B cell (primary cell): ENCODE measurements at regions of chr2 and their contacts with region 1.

Region 1: DNA sequence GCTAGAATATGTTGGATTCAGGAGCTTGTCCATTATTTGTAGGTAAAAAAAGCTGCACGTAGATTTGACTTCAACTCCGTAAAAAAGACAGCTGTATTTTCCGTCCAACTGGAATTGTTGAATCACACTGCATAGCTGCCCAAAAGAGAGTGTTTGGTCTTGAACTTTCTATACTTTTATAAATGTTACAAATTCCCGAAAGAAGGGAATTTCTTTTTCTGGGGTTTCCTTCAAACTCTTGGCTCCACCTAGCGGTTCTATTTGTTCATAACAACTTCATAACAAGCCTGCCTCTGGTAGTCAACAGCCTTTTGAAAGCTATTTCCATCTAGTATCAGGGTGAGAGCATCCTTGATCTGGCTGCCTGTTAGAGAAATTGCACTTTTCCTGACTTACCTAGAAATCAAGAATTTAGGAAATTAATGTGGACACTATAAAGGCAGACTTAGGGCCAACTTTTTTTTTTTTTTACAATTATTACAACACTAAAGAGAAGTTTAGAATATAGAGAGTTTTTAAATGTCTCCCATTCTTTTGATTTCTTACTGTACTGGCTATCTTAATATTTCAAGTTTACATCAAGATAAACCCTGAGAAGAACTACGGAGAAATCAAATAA is 48.1 kb downstream of the TMEM185B start:
- DNase-seq: peak; percentile 72
- ATAC-seq: no peak
- H3K4me3 ChIP-seq: no peak overlapping the region
- H3K4me3 Mint-ChIP-seq: no peak overlapping the region
- H3K27ac ChIP-seq: no peak overlapping the region
- H3K27ac Mint-ChIP-seq: peak overlapping the region; percentile 64
- H3K4me1 ChIP-seq: peaks cover 40 to 43% of the 10 kb centered on the region in 2 donors
- H3K4me1 Mint-ChIP-seq: peaks cover 42% of the 10 kb centered on the region
- H3K27me3 ChIP-seq: no peaks in the 10 kb centered on the region
- H3K27me3 Mint-ChIP-seq: no peaks in the 10 kb centered on the region
- CTCF ChIP-seq: peak; percentile 94

Region 2: GRCh38 chr2:119641562-119642258 is 533.4 kb before region 1 on chr2:
- CTCF ChIA-PET with region 1: interaction called, 34 read pairs
- POLR2A ChIA-PET with region 1: no interaction called
- intact Hi-C with region 1: loop called (anchors 10 kb)
- DNase-seq: peak; percentile 77
- ATAC-seq: peak; percentile 86
- H3K4me3 ChIP-seq: no peak overlapping the region
- H3K4me3 Mint-ChIP-seq: no peak overlapping the region
- H3K27ac ChIP-seq: no peak overlapping the region
- H3K27ac Mint-ChIP-seq: no peak overlapping the region
- H3K4me1 ChIP-seq: peaks cover 0 to 5% of the 10 kb centered on the region in 2 donors
- H3K4me1 Mint-ChIP-seq: peaks cover 6% of the 10 kb centered on the region
- H3K27me3 ChIP-seq: no peaks in the 10 kb centered on the region
- H3K27me3 Mint-ChIP-seq: peaks cover 25% of the 10 kb centered on the region
- CTCF ChIP-seq: peak; percentile 98

Region 3: GRCh38 chr2:119746836-119747686 is 428.0 kb before region 1 on chr2:
- CTCF ChIA-PET with region 1: interaction called, 17 read pairs
- POLR2A ChIA-PET with region 1: no interaction called
- intact Hi-C with region 1: no loop called
- DNase-seq: no peak
- ATAC-seq: no peak
- H3K4me3 ChIP-seq: no peak overlapping the region
- H3K4me3 Mint-ChIP-seq: no peak overlapping the region
- H3K27ac ChIP-seq: no peak overlapping the region
- H3K27ac Mint-ChIP-seq: no peak overlapping the region
- H3K4me1 ChIP-seq: no peaks in the 10 kb centered on the region
- H3K4me1 Mint-ChIP-seq: no peaks in the 10 kb centered on the region
- H3K27me3 ChIP-seq: no peaks in the 10 kb centered on the region
- H3K27me3 Mint-ChIP-seq: peaks cover 46% of the 10 kb centered on the region
- CTCF ChIP-seq: no peak

Region 4: GRCh38 chr2:119809339-119810048 is 365.6 kb before region 1 on chr2:
- CTCF ChIA-PET with region 1: no interaction called
- POLR2A ChIA-PET with region 1: no interaction called
- intact Hi-C with region 1: no loop called
- DNase-seq: no peak
- ATAC-seq: no peak
- H3K4me3 ChIP-seq: no peak overlapping the region
- H3K4me3 Mint-ChIP-seq: no peak overlapping the region
- H3K27ac ChIP-seq: no peak overlapping the region
- H3K27ac Mint-ChIP-seq: no peak overlapping the region
- H3K4me1 ChIP-seq: no peaks in the 10 kb centered on the region
- H3K4me1 Mint-ChIP-seq: peaks cover 19% of the 10 kb centered on the region
- H3K27me3 ChIP-seq: no peaks in the 10 kb centered on the region
- H3K27me3 Mint-ChIP-seq: no peaks in the 10 kb centered on the region
- CTCF ChIP-seq: no peak

Region 5: GRCh38 chr2:119826370-119826961 is 348.6 kb before region 1 on chr2:
- CTCF ChIA-PET with region 1: interaction called, 5 read pairs
- POLR2A ChIA-PET with region 1: interaction called, 5 read pairs
- intact Hi-C with region 1: loop called (anchors 5 kb)
- DNase-seq: peak; percentile 40
- ATAC-seq: peak; percentile 53
- H3K4me3 ChIP-seq: no peak overlapping the region
- H3K4me3 Mint-ChIP-seq: no peak overlapping the region
- H3K27ac ChIP-seq: no peak overlapping the region
- H3K27ac Mint-ChIP-seq: no peak overlapping the region
- H3K4me1 ChIP-seq: no peaks in the 10 kb centered on the region
- H3K4me1 Mint-ChIP-seq: peaks cover 11% of the 10 kb centered on the region
- H3K27me3 ChIP-seq: no peaks in the 10 kb centered on the region
- H3K27me3 Mint-ChIP-seq: no peaks in the 10 kb centered on the region
- CTCF ChIP-seq: peak; percentile 56

Region 6: GRCh38 chr2:120223034-120223912 is 48.2 kb after region 1 on chr2 and contains the start of gene TMEM185B:
- CTCF ChIA-PET with region 1: interaction called, 34 read pairs
- POLR2A ChIA-PET with region 1: interaction called, 5 read pairs
- intact Hi-C with region 1: loop called (anchors 1 kb)
- DNase-seq: peak; percentile 93
- ATAC-seq: peak; percentile 96
- H3K4me3 ChIP-seq: peak within 1 kb of the TSS; percentile 68 to 83 (median 71)
- H3K4me3 Mint-ChIP-seq: peak within 1 kb of the TSS; percentile 89
- H3K27ac ChIP-seq: peak within 1 kb of the TSS; percentile 93 to 96
- H3K27ac Mint-ChIP-seq: peak within 1 kb of the TSS; percentile 95
- H3K4me1 ChIP-seq: peaks cover 25 to 31% of the 10 kb centered on the region in 2 donors
- H3K4me1 Mint-ChIP-seq: peaks cover 55% of the 10 kb centered on the region
- H3K27me3 ChIP-seq: no peaks in the 10 kb centered on the region
- H3K27me3 Mint-ChIP-seq: no peaks in the 10 kb centered on the region
- CTCF ChIP-seq: peak; percentile 38
- total RNA-seq, gene TMEM185B: 29.6 TPM in 2 replicates

Region 7: GRCh38 chr2:120312861-120313694 is 138.0 kb after region 1 on chr2:
- CTCF ChIA-PET with region 1: interaction called, 82 read pairs
- POLR2A ChIA-PET with region 1: interaction called, 3 read pairs
- intact Hi-C with region 1: loop called (anchors 1 kb)
- DNase-seq: peak; percentile 76
- ATAC-seq: peak; percentile 74
- H3K4me3 ChIP-seq: peak overlapping the region; percentile 16 to 42 (median 35)
- H3K4me3 Mint-ChIP-seq: peak overlapping the region; percentile 86
- H3K27ac ChIP-seq: peak overlapping the region in 1 of 2 donors; percentile 36
- H3K27ac Mint-ChIP-seq: peak overlapping the region; percentile 37
- H3K4me1 ChIP-seq: peaks cover 10 to 14% of the 10 kb centered on the region in 2 donors
- H3K4me1 Mint-ChIP-seq: peaks cover 14% of the 10 kb centered on the region
- H3K27me3 ChIP-seq: peaks cover 0 to 16% (median 1%) of the 10 kb centered on the region in 4 experiments
- H3K27me3 Mint-ChIP-seq: peaks cover 22% of the 10 kb centered on the region
- CTCF ChIP-seq: peak; percentile 83